MCF 10A (cell line): ENCODE measurements at regions of chr18 and their contacts with region 1.

Region 1: DNA sequence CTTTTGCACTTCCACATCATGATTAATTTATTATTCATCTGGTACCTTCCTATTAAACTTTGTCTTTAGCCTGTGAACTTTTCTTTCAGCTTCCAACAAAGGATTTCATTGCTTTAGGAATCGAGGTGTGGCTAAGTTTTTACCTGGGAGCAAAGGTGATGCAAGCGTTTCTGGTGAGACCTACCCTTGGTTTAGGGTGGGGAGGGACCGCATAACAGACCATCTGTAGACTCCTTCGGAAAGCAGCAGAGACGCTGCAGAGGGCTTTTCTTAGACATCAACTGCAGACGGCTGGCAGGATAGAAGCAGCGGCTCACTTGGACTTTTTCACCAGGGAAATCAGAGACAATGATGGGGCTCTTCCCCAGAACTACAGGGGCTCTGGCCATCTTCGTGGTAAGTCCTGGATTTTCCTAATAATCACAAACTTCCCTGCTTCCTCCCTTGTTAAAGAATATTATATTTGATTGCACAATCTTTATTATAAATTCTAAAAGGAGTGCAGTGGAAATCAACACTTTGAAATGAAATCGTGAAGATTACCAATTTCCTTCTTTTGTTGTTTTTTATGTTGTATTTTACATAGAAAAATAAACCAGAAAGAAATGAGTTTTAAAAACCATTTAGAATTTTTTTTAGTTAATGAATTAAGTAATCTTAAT is at the start of gene DSG3:
- DNase-seq: peak; percentile 94
- H3K4me3 Mint-ChIP-seq: peak within 1 kb of the TSS; percentile 75
- H3K27ac Mint-ChIP-seq: peak within 1 kb of the TSS; percentile 88
- H3K4me1 Mint-ChIP-seq: peaks cover 9% of the 10 kb centered on the region
- H3K27me3 Mint-ChIP-seq: no peaks in the 10 kb centered on the region
- CTCF ChIP-seq: no peak
- total RNA-seq, gene DSG3: 65.4 and 68.5 TPM in 2 replicates

Region 2: GRCh38 chr18:31206787-31207381 is 240.8 kb before region 1 on chr18:
- CTCF ChIA-PET with region 1: no interaction called
- POLR2A ChIA-PET with region 1: interaction called, 11 read pairs
- intact Hi-C with region 1: no loop called
- DNase-seq: peak; percentile 94
- H3K4me3 Mint-ChIP-seq: peak overlapping the region; percentile 69
- H3K27ac Mint-ChIP-seq: peak overlapping the region; percentile 77
- H3K4me1 Mint-ChIP-seq: peaks cover 32% of the 10 kb centered on the region
- H3K27me3 Mint-ChIP-seq: no peaks in the 10 kb centered on the region
- CTCF ChIP-seq: peak; percentile 7

Region 3: DNA sequence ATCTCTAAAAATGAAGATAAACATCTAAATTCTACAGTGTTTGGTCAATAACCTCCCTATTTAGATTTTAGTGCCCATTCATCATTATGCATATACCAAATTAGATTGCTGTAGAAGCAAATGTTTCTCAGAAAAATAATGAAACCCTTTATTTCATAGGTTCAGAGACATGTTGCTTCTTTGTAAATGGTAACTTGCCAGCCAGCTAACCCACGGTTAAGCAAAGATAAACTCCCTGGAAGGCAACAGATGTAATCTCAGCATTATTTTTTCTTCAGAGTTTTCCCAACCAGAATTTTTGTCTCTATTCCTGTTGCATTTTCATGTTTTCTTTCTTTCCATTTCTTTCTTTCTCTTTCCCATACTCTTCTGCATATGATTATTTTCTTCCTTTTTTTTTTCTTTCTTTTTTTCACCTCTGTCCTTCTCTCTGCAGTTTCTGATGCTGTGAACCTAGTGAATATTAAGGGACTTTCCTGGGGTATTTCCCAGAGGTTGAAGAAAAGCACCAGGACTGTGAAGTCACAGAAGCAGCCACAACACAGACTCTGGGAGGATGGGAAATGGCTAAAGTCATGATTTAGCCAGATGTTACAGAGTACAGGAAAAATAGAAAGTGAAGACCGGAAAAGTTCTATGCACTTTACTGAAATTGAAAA is 179.7 kb before region 1 on chr18:
- CTCF ChIA-PET with region 1: interaction called, 10 read pairs
- POLR2A ChIA-PET with region 1: interaction called, 94 read pairs
- intact Hi-C with region 1: loop called (anchors 5 kb)
- DNase-seq: no peak
- H3K4me3 Mint-ChIP-seq: peak overlapping the region; percentile 12
- H3K27ac Mint-ChIP-seq: peak overlapping the region; percentile 84
- H3K4me1 Mint-ChIP-seq: peaks cover 28% of the 10 kb centered on the region
- H3K27me3 Mint-ChIP-seq: no peaks in the 10 kb centered on the region
- CTCF ChIP-seq: no peak

Region 4: GRCh38 chr18:31325051-31325450 is 122.6 kb before region 1 on chr18:
- CTCF ChIA-PET with region 1: no interaction called
- POLR2A ChIA-PET with region 1: interaction called, 20 read pairs
- intact Hi-C with region 1: no loop called
- DNase-seq: peak; percentile 94
- H3K4me3 Mint-ChIP-seq: no peak overlapping the region
- H3K27ac Mint-ChIP-seq: peak overlapping the region; percentile 50
- H3K4me1 Mint-ChIP-seq: peaks cover 8% of the 10 kb centered on the region
- H3K27me3 Mint-ChIP-seq: no peaks in the 10 kb centered on the region
- CTCF ChIP-seq: no peak

Region 5: DNA sequence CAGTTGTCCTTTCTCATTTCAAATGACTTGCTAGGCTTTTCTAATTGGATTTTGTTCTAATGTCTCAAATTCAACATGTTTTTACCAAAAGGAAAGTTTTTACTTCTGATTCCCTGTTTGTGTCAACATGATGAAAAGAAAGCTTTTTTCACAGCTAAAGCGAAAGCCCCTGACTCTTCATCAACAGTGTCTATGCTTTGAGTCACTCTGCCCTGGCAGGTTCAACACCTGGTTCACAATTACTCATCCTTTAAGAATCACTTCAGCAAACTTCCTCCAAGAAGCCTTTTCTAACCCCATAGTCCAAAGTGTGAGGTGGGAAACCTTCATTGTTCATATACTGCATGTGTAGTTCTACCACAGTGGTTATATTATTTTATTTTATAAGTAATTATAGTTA is 42.7 kb after region 1 on chr18:
- CTCF ChIA-PET with region 1: no interaction called
- POLR2A ChIA-PET with region 1: interaction called, 106 read pairs
- intact Hi-C with region 1: loop called (anchors 2 kb)
- DNase-seq: peak; percentile 73
- H3K4me3 Mint-ChIP-seq: no peak overlapping the region
- H3K27ac Mint-ChIP-seq: peak overlapping the region; percentile 65
- H3K4me1 Mint-ChIP-seq: peaks cover 49% of the 10 kb centered on the region
- H3K27me3 Mint-ChIP-seq: no peaks in the 10 kb centered on the region
- CTCF ChIP-seq: no peak

Region 6: GRCh38 chr18:31825772-31826171 is 378.1 kb after region 1 on chr18:
- CTCF ChIA-PET with region 1: no interaction called
- POLR2A ChIA-PET with region 1: no interaction called
- intact Hi-C with region 1: no loop called
- DNase-seq: no peak
- H3K4me3 Mint-ChIP-seq: no peak overlapping the region
- H3K27ac Mint-ChIP-seq: no peak overlapping the region
- H3K4me1 Mint-ChIP-seq: no peaks in the 10 kb centered on the region
- H3K27me3 Mint-ChIP-seq: no peaks in the 10 kb centered on the region
- CTCF ChIP-seq: no peak